Activated B cell treated with CpG ODN at 0.5 μM for 24 hours (primary cell): ENCODE measurements at regions of chrX and their contacts with region 1.

Region 1: DNA sequence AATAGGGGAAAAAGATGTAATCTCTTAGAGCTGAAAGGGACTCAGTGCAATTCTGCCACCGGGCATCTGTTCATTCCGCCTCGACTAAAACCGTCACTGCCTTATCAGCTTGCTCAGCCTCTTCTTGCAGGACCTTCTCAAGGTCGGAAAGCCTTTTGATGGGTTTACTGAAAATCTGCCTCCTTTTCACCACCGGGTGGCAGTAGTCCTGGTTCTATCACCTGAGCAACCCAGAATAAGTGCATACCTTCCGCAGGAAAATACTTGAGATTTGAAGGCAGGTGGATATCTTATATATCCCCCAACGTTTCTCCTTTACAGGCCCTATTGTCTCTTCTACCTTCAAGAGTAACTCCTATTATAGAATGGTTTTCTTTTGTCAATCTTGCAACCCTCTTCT is 103.4 kb upstream of the PAK3 start:
- DNase-seq: no peak
- ATAC-seq: no peak
- H3K4me3 Mint-ChIP-seq: no peak overlapping the region
- H3K27ac Mint-ChIP-seq: no peak overlapping the region
- H3K4me1 Mint-ChIP-seq: no peaks in the 10 kb centered on the region
- H3K27me3 Mint-ChIP-seq: peaks cover 6% of the 10 kb centered on the region
- CTCF ChIP-seq: no peak

Region 2: GRCh38 chrX:111098874-111099273 is 106.3 kb after region 1 on chrX:
- CTCF ChIA-PET with region 1: no interaction called
- POLR2A ChIA-PET with region 1: no interaction called
- intact Hi-C with region 1: loop called (anchors 1 kb)
- DNase-seq: no peak
- ATAC-seq: peak; percentile 61
- H3K4me3 Mint-ChIP-seq: peak overlapping the region; percentile 60
- H3K27ac Mint-ChIP-seq: no peak overlapping the region
- H3K4me1 Mint-ChIP-seq: peaks cover 18% of the 10 kb centered on the region
- H3K27me3 Mint-ChIP-seq: peaks cover 9% of the 10 kb centered on the region
- CTCF ChIP-seq: no peak

Region 3: GRCh38 chrX:111244235-111244750 is 251.7 kb after region 1 on chrX:
- CTCF ChIA-PET with region 1: no interaction called
- POLR2A ChIA-PET with region 1: no interaction called
- intact Hi-C with region 1: loop called (anchors 1 kb)
- DNase-seq: no peak
- ATAC-seq: no peak
- H3K4me3 Mint-ChIP-seq: no peak overlapping the region
- H3K27ac Mint-ChIP-seq: no peak overlapping the region
- H3K4me1 Mint-ChIP-seq: no peaks in the 10 kb centered on the region
- H3K27me3 Mint-ChIP-seq: peaks cover 1% of the 10 kb centered on the region
- CTCF ChIP-seq: no peak

Region 4: DNA sequence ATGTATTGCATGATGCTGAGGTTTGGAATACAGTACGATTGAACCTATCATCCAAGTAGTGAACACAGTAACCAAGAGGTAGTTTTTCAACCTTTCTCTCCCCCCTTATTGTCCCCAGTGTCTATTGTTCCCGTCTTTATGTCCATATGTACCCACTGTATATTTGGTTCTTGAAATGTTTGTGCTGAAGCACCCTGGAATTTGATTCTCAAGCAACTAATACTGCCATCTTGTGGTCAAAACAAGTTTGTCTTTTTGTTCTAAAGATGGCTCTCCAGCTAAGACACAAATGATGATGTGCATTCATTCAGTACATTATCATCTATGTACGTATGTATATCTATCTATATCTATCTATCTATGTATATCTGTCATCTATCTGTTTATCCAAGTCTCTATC is 452.9 kb after region 1 on chrX:
- CTCF ChIA-PET with region 1: no interaction called
- POLR2A ChIA-PET with region 1: no interaction called
- intact Hi-C with region 1: loop called (anchors 5 kb)
- DNase-seq: no peak
- ATAC-seq: no peak
- H3K4me3 Mint-ChIP-seq: no peak overlapping the region
- H3K27ac Mint-ChIP-seq: no peak overlapping the region
- H3K4me1 Mint-ChIP-seq: no peaks in the 10 kb centered on the region
- H3K27me3 Mint-ChIP-seq: peaks cover 3% of the 10 kb centered on the region
- CTCF ChIP-seq: no peak

Region 5: DNA sequence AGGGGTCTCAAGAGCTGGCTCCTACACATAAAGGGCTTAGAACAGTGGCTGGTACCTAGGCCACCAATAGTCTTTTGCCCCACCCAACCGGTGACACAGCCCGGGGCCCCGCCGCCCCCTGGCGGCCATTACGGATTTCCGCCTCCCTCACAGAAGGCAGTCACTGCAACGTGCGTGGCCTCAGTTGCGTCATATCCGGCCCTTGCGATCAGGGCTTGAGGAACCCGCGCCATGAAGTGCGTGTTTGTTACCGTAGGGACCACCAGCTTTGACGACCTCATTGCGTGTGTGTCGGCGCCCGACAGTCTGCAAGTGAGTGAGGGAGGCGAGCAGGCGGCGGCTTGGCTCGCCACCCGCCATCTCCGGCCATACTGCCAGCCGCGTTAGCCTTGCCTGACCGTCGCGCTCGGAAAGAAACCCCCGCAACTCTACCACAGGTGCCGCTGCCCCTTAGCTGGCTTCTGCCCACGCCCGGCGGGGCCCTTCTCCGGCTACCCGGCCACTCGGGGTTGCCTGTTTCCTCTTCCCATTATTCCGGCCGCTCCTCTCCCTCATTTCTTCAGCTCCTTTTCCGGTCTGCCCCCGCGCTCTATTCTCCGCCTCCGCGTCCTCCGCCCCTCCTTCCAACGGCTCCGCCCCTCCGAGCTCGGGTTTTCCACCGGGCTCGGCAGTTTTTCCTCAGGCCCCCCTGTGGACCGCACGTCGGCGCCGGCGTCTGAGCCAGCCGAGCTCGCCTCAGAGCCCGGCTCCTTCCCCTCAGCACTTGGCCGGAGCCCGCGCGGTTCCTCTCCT is 688.6 kb after region 1 on chrX and contains the start of gene ALG13:
- CTCF ChIA-PET with region 1: no interaction called
- POLR2A ChIA-PET with region 1: no interaction called
- intact Hi-C with region 1: loop called (anchors 5 kb)
- DNase-seq: peak; percentile 73
- ATAC-seq: peak; percentile 85
- H3K4me3 Mint-ChIP-seq: peak within 1 kb of the TSS; percentile 90
- H3K27ac Mint-ChIP-seq: peak within 1 kb of the TSS; percentile 96
- H3K4me1 Mint-ChIP-seq: peaks cover 28% of the 10 kb centered on the region
- H3K27me3 Mint-ChIP-seq: no peaks in the 10 kb centered on the region
- CTCF ChIP-seq: no peak
- total RNA-seq, gene ALG13: 63.4 and 84.2 TPM in 2 replicates